Dendritic cell treated with granulocyte-macrophage colony-stimulating factor and Interleukin-4, amounts not matched to agents 40 ng/mL and 50 ng/mL, for 4 days (primary cell): ENCODE measurements at regions of chr15 and their contacts with region 1.

Region 1: GRCh38 chr15:76345880-76346668 is 9.5 kb downstream of the ISL2 start:
- H3K4me3 Mint-ChIP-seq: peak overlapping the region; percentile 79
- H3K27ac Mint-ChIP-seq: peak overlapping the region; percentile 68
- H3K4me1 Mint-ChIP-seq: peaks cover 33% of the 10 kb centered on the region
- H3K27me3 Mint-ChIP-seq: peaks cover 73% of the 10 kb centered on the region

Region 2: DNA sequence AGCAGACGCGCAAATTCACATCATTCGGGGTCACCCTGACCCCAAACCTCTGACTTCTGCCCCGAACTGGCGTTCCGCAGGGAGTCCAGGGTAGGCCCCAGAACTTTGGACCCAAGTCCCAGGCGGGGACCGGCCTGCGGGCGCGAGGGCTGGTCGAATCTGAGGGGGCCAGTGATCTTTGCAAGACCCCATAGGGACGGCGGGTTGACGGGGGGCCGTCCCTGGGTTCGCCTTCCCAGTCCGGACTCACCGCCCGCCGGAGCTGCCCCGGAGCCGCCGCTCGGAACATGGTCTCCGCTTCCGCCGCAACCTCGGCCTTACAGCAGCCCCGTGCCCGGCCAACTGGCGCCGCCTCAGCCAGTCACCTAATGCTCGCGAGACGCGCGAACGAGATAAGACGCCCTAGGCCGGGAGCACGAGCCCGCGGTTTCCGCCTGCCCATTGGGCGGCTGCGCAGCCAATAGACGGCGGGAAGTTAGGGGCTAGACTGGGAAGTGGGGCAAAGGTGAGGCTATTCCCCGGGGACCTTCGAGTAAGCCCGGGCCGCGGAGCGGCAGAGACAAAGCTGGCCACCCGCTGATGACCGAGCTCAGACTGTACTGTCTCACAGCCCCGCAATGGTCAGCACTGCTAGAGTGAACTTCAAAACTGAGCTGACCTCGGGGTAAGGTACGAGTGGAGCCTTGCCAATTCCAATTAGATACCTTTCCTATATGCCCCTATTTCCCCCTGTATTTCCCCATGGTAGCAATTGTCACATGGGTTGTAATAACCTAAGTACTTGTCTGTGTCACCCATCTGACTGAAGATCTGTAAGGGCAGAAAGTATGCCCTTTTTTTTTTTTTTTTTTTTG is 34.7 kb before region 1 on chr15 and contains the start of gene ETFA:
- intact Hi-C with region 1: loop called (anchors 5 kb)
- H3K4me3 Mint-ChIP-seq: peak within 1 kb of the TSS; percentile 78
- H3K27ac Mint-ChIP-seq: peak within 1 kb of the TSS; percentile 86
- H3K4me1 Mint-ChIP-seq: peaks cover 26% of the 10 kb centered on the region
- H3K27me3 Mint-ChIP-seq: peaks cover 13% of the 10 kb centered on the region

Region 3: DNA sequence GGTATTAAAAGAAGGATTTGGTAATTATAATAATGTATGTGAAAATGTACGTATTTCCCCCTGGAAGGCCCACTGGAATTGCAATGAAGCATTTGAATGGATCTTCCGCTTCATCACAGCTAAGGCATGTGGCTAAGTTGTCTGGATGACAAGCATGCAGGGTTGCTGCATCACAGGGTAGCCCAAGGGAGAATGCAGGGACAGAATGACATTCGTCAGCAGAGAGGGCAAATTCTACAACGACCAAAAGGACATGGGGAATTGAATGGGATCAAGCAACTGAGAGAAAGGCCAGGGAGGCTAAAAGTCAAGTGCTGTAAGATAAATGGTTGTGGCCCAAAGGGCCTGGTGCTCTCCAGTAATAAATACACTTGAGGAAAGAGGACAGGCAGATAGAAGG is 85.9 kb after region 1 on chr15:
- intact Hi-C with region 1: no loop called
- H3K4me3 Mint-ChIP-seq: no peak overlapping the region
- H3K27ac Mint-ChIP-seq: no peak overlapping the region
- H3K4me1 Mint-ChIP-seq: no peaks in the 10 kb centered on the region
- H3K27me3 Mint-ChIP-seq: no peaks in the 10 kb centered on the region